Activated B cell treated with CpG ODN at 0.5 μM for 24 hours (primary cell): ENCODE measurements at regions of chr9 and their contacts with region 1.

Region 1: GRCh38 chr9:131018621-131019020 is 9.6 kb downstream of the LAMC3 start:
- DNase-seq: no peak
- ATAC-seq: no peak
- H3K4me3 Mint-ChIP-seq: no peak overlapping the region
- H3K27ac Mint-ChIP-seq: no peak overlapping the region
- H3K4me1 Mint-ChIP-seq: no peaks in the 10 kb centered on the region
- H3K27me3 Mint-ChIP-seq: peaks cover 12% of the 10 kb centered on the region
- CTCF ChIP-seq: no peak

Region 2: DNA sequence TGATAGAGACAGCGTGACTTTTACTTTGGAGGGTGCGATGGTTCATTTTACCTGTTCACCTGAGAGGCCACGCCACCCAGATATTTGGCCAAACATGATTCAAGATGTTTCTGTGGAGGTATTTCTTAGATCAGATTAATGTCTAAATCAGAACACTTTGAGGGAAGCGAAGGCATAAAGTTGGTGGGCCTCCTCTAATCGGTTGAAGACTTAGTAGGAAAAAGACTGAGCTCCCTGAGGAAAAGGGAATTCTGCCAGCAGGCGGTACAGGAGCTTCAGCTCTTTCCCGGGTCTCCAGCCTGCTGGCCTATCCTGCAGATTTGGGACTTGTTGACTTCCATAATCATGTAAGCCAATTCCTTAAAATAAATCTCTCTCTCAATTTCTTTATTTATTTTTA is 16.6 kb before region 1 on chr9:
- CTCF ChIA-PET with region 1: no interaction called
- POLR2A ChIA-PET with region 1: interaction called, 11 read pairs
- intact Hi-C with region 1: no loop called
- DNase-seq: no peak
- ATAC-seq: no peak
- H3K4me3 Mint-ChIP-seq: no peak overlapping the region
- H3K27ac Mint-ChIP-seq: no peak overlapping the region
- H3K4me1 Mint-ChIP-seq: no peaks in the 10 kb centered on the region
- H3K27me3 Mint-ChIP-seq: peaks cover 21% of the 10 kb centered on the region
- CTCF ChIP-seq: no peak